B cell (primary cell): ENCODE measurements at regions of chr14 and their contacts with region 1.

Region 1: DNA sequence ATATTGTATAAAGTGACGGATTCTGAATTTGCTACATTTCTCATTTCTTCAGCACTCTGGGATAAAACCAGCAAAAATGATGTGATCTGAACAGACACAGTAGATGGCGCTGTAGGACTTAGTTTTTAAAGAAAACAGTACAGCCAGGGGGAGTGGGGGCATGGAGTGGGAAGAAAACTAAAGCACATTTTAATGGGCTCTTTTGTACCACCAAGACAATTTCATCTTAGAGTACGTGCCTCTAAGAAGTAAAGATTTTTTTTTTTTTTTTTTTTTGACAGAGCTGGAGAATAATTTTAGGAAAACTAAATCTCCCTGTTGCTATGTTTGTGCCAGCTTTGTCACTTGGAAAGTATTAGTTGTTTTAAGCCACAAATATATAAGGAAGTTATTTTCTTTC is 124.4 kb downstream of the RAD51B start:
- DNase-seq: peak; percentile 77
- ATAC-seq: peak; percentile 60
- H3K4me3 ChIP-seq: no peak overlapping the region
- H3K4me3 Mint-ChIP-seq: no peak overlapping the region
- H3K27ac ChIP-seq: no peak overlapping the region
- H3K27ac Mint-ChIP-seq: no peak overlapping the region
- H3K4me1 ChIP-seq: peaks cover 0 to 3% of the 10 kb centered on the region in 2 donors
- H3K4me1 Mint-ChIP-seq: peaks cover 5% of the 10 kb centered on the region
- H3K27me3 ChIP-seq: no peaks in the 10 kb centered on the region
- H3K27me3 Mint-ChIP-seq: no peaks in the 10 kb centered on the region
- CTCF ChIP-seq: peak; percentile 84

Region 2: DNA sequence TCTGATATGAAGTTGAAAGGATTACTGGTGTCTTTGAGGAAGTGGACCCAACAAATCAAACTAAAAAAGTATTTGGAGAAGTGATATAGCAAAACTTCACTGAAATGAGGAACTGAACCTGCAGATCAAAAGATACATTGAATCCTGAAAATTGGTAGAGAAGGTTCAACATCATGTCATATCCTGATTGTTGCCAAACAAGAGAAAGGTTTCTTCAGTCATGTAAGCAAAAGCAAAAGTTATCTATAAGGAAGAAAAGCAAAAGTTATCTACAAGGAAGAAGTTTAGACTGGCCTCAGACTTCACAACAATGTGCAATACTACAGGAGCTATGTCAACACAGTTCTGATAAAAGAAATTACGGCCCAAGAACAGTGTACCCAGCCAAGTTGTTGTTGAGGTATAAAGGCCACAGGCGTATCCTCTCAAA is 18.3 kb after region 1 on chr14:
- CTCF ChIA-PET with region 1: interaction called, 10 read pairs
- POLR2A ChIA-PET with region 1: interaction called, 6 read pairs
- intact Hi-C with region 1: no loop called
- DNase-seq: peak; percentile 65
- ATAC-seq: peak; percentile 47
- H3K4me3 ChIP-seq: no peak overlapping the region
- H3K4me3 Mint-ChIP-seq: peak overlapping the region; percentile 6
- H3K27ac ChIP-seq: peak overlapping the region; percentile 11 to 58
- H3K27ac Mint-ChIP-seq: peak overlapping the region; percentile 50
- H3K4me1 ChIP-seq: peaks cover 5 to 20% of the 10 kb centered on the region in 2 donors
- H3K4me1 Mint-ChIP-seq: peaks cover 21% of the 10 kb centered on the region
- H3K27me3 ChIP-seq: no peaks in the 10 kb centered on the region
- H3K27me3 Mint-ChIP-seq: no peaks in the 10 kb centered on the region
- CTCF ChIP-seq: no peak

Region 3: GRCh38 chr14:68011406-68012028 is 67.6 kb after region 1 on chr14:
- CTCF ChIA-PET with region 1: no interaction called
- POLR2A ChIA-PET with region 1: no interaction called
- intact Hi-C with region 1: no loop called
- DNase-seq: no peak
- ATAC-seq: no peak
- H3K4me3 ChIP-seq: no peak overlapping the region
- H3K4me3 Mint-ChIP-seq: no peak overlapping the region
- H3K27ac ChIP-seq: no peak overlapping the region
- H3K27ac Mint-ChIP-seq: no peak overlapping the region
- H3K4me1 ChIP-seq: no peaks in the 10 kb centered on the region
- H3K4me1 Mint-ChIP-seq: no peaks in the 10 kb centered on the region
- H3K27me3 ChIP-seq: no peaks in the 10 kb centered on the region
- H3K27me3 Mint-ChIP-seq: no peaks in the 10 kb centered on the region
- CTCF ChIP-seq: no peak

Region 4: DNA sequence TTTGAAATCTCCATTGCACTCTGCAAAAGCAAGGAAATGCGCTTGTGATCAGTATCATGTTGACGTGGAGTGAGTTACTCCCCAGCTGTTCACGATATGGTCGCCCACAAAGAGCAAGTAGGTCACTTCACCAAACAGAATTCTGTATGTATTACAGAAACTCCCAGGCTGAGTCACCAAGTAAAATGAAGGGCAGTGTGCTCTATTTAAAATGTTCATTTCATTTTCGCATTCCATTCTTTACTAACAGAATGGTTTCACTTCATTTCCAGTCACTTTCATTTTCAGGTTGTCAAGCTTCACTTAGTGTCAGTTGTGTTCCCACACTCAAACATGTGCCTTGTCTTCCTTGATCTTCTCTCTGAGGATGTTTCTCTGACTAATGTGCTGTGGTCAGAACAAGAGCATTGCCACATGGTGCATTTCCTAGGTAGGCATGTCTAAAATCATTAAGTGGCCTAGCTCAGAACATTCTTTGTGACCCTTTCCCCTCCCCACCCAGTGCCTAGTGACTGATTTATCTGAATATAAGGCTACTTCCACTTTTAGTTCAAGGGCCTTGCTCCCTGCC is 266.9 kb after region 1 on chr14:
- CTCF ChIA-PET with region 1: interaction called, 4 read pairs
- POLR2A ChIA-PET with region 1: no interaction called
- intact Hi-C with region 1: loop called (anchors 10 kb)
- DNase-seq: peak; percentile 75
- ATAC-seq: peak; percentile 85
- H3K4me3 ChIP-seq: peak overlapping the region; percentile 9 to 45 (median 36)
- H3K4me3 Mint-ChIP-seq: peak overlapping the region; percentile 83
- H3K27ac ChIP-seq: peak overlapping the region; percentile 56 to 71
- H3K27ac Mint-ChIP-seq: peak overlapping the region; percentile 93
- H3K4me1 ChIP-seq: peaks cover 28 to 29% of the 10 kb centered on the region in 2 donors
- H3K4me1 Mint-ChIP-seq: peaks cover 43% of the 10 kb centered on the region
- H3K27me3 ChIP-seq: no peaks in the 10 kb centered on the region
- H3K27me3 Mint-ChIP-seq: no peaks in the 10 kb centered on the region
- CTCF ChIP-seq: no peak

Region 5: GRCh38 chr14:69090187-69090789 is 1146.3 kb after region 1 on chr14:
- CTCF ChIA-PET with region 1: interaction called, 10 read pairs
- POLR2A ChIA-PET with region 1: no interaction called
- intact Hi-C with region 1: no loop called
- DNase-seq: peak; percentile 24
- ATAC-seq: no peak
- H3K4me3 ChIP-seq: no peak overlapping the region
- H3K4me3 Mint-ChIP-seq: no peak overlapping the region
- H3K27ac ChIP-seq: no peak overlapping the region
- H3K27ac Mint-ChIP-seq: no peak overlapping the region
- H3K4me1 ChIP-seq: no peaks in the 10 kb centered on the region
- H3K4me1 Mint-ChIP-seq: no peaks in the 10 kb centered on the region
- H3K27me3 ChIP-seq: no peaks in the 10 kb centered on the region
- H3K27me3 Mint-ChIP-seq: no peaks in the 10 kb centered on the region
- CTCF ChIP-seq: peak; percentile 58

Region 6: DNA sequence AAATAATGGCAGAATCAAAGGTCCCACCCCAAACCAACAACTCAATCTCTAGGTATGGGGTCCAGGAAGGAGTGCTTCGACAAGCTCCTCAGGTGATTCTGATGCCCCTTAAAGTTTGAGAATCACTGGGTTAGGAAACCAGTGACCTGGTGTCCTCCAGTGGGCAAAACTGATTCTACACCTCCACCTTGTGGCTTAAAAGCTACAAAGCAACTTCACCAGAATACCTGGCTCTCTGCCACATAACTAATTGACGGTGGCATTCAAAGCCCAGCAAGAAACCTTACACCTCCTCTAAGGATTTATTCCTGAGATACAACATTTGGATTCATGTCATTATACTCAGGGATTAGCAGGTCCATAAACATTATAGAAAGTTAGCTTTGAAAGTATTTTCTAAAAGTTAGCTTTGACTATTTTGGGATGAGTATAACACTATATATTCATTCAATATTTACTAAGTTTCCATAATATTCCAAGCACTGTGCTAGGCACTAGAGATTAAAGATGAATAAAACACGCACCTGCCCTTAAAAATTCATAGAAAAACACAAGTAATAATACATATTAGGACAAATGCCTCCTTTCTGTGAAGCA is 1163.6 kb after region 1 on chr14:
- CTCF ChIA-PET with region 1: interaction called, 8 read pairs
- POLR2A ChIA-PET with region 1: no interaction called
- intact Hi-C with region 1: loop called (anchors 1 kb)
- DNase-seq: peak; percentile 44
- ATAC-seq: no peak
- H3K4me3 ChIP-seq: no peak overlapping the region
- H3K4me3 Mint-ChIP-seq: no peak overlapping the region
- H3K27ac ChIP-seq: no peak overlapping the region
- H3K27ac Mint-ChIP-seq: no peak overlapping the region
- H3K4me1 ChIP-seq: no peaks in the 10 kb centered on the region
- H3K4me1 Mint-ChIP-seq: no peaks in the 10 kb centered on the region
- H3K27me3 ChIP-seq: no peaks in the 10 kb centered on the region
- H3K27me3 Mint-ChIP-seq: no peaks in the 10 kb centered on the region
- CTCF ChIP-seq: peak; percentile 64